ENCODE measurements at regions of chr1 and their contacts with region 1.

Region 1: DNA sequence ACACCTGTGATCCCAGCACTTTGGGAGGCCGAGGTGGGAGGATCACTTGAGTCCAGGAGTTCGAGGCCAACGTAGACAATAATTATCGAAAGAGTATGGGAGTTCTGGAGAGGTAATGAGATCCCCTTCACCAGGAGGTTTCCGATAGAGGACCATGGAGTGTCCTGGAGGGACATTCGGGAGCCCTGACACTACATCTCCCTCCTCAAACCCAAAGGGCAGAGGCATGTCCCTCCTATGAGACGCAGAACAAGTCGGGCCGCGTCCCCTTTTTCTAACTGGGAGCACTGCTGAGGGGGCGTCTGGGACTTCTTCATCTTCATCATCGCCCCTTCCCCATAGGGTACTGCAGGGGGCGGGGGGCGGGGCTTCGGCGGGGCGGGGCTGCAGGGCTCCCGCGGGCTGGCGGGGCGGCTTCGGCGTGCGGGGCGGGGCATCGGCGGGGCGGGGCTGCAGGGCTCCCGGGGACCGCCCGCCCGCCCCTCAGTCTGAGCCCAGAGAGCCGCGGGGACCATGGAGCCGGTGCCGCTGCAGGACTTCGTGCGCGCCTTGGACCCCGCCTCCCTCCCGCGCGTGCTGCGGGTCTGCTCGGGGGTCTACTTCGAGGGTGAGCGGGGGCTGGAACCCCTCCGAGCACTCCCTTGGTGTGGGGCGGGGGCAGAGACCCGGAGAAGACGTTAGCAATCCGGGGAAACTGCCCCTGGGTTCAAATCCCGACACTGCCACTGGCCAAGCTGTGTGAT is at the start of gene THEMIS2:
- DNase-seq: peak; percentile 71
- H3K4me3 ChIP-seq: peak within 1 kb of the TSS; percentile 77
- H3K27ac ChIP-seq: peak within 1 kb of the TSS; percentile 0
- H3K4me1 ChIP-seq: peaks cover 66% of the 10 kb centered on the region
- CTCF ChIP-seq: no peak
- total RNA-seq, gene THEMIS2: 0.98 and 4.1 TPM in 2 replicates

Region 2: DNA sequence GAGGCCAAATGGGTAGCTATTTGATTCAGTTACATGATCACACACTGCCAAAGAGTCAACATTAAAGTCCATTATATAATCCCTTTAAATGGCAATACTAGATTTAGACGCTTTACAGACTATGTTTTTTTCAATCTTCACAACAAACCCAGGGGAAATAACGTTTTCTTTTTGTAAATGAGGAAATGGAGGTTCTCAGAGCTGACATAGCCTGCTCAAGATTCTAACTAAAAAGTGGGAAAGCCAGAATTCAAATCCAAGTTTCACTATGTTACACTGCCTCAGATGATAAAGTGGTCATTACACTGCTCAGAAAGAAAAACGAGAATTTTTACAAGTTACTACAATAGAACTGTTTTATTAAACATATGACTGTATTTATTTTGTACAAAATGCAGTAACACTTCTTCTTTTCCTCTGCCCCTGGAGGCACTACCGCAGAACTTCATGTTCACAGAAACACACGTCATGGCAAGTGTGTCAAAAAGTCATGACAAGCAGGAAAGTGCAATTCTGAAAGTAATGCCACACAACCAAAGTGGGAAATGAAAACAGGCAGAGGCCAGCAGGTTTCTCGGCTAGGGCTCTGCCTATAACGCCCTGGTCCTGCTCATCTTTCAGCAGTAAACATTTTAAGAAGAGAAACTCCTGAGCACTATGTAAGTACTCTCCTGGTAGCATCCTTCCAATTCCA is 19.1 kb after region 1 on chr1:
- CTCF ChIA-PET with region 1: no interaction called
- POLR2A ChIA-PET with region 1: interaction called, 4 read pairs
- intact Hi-C with region 1: loop called (anchors 1 kb)
- DNase-seq: peak; percentile 64
- H3K4me3 ChIP-seq: peak overlapping the region; percentile 23
- H3K27ac ChIP-seq: peak overlapping the region; percentile 83
- H3K4me1 ChIP-seq: peaks cover 68% of the 10 kb centered on the region
- CTCF ChIP-seq: peak; percentile 57